Activated CD8-positive, alpha-beta T cell treated with anti-CD3 and anti-CD28 coated beads for 36 hours (primary cell): ENCODE measurements at regions of chr10 and their contacts with region 1.

Region 1: GRCh38 chr10:74081192-74081803 is 69.3 kb downstream of the AP3M1 start:
- DNase-seq: peak; percentile 56
- ATAC-seq: peak; percentile 37
- H3K4me3 Mint-ChIP-seq: no peak overlapping the region
- H3K27ac Mint-ChIP-seq: no peak overlapping the region
- H3K4me1 Mint-ChIP-seq: peaks cover 40% of the 10 kb centered on the region
- H3K27me3 Mint-ChIP-seq: no peaks in the 10 kb centered on the region
- CTCF ChIP-seq: peak; percentile 71

Region 2: GRCh38 chr10:73956476-73957359 is 124.6 kb before region 1 on chr10:
- CTCF ChIA-PET with region 1: interaction called, 30 read pairs
- POLR2A ChIA-PET with region 1: no interaction called
- intact Hi-C with region 1: loop called (anchors 5 kb)
- DNase-seq: peak; percentile 53
- ATAC-seq: peak; percentile 82
- H3K4me3 Mint-ChIP-seq: peak overlapping the region; percentile 38
- H3K27ac Mint-ChIP-seq: peak overlapping the region; percentile 84
- H3K4me1 Mint-ChIP-seq: peaks cover 40% of the 10 kb centered on the region
- H3K27me3 Mint-ChIP-seq: no peaks in the 10 kb centered on the region
- CTCF ChIP-seq: no peak

Region 3: GRCh38 chr10:73997787-73998622 is 83.3 kb before region 1 on chr10 and contains the start of gene VCL:
- CTCF ChIA-PET with region 1: interaction called, 14 read pairs
- POLR2A ChIA-PET with region 1: interaction called, 3 read pairs
- intact Hi-C with region 1: loop called (anchors 5 kb)
- DNase-seq: peak; percentile 97
- ATAC-seq: peak; percentile 98
- H3K4me3 Mint-ChIP-seq: peak within 1 kb of the TSS; percentile 92
- H3K27ac Mint-ChIP-seq: peak within 1 kb of the TSS; percentile 98
- H3K4me1 Mint-ChIP-seq: peaks cover 24% of the 10 kb centered on the region
- H3K27me3 Mint-ChIP-seq: no peaks in the 10 kb centered on the region
- CTCF ChIP-seq: no peak
- total RNA-seq, gene VCL: 16.9 to 17.7 TPM

Region 4: DNA sequence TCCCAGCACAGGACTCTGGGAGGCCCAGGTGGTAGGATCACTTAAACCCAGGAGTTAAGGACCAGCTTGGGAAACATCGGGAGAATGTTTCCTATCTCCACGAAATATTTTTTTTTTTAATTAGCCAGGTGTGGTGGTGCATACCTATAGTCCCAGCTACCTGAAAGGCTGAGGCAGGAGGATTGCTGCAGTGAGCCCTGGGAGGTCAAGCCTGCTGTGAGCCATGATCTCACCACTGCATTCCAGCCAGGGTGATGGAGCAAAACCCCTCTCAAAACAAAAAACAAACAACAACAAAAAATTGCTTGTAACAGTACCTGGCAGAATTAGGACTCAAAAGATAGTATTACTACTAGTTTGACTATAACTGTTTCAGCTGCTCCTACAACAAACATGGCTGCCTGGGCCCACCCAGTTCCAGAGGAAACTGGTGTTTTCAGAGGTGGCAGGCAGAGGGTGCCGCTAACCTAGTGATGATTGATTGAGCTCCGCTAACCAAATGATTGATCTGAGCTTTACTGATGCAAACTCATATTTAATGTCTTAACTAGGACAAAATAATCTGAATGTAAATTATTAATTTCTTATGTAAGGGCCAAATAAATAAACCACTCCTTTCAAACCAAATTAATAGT is 12.3 kb after region 1 on chr10:
- CTCF ChIA-PET with region 1: interaction called, 36 read pairs
- POLR2A ChIA-PET with region 1: no interaction called
- intact Hi-C with region 1: no loop called
- DNase-seq: no peak
- ATAC-seq: no peak
- H3K4me3 Mint-ChIP-seq: no peak overlapping the region
- H3K27ac Mint-ChIP-seq: no peak overlapping the region
- H3K4me1 Mint-ChIP-seq: no peaks in the 10 kb centered on the region
- H3K27me3 Mint-ChIP-seq: no peaks in the 10 kb centered on the region
- CTCF ChIP-seq: no peak

Region 5: GRCh38 chr10:74213571-74214162 is 132.4 kb after region 1 on chr10:
- CTCF ChIA-PET with region 1: no interaction called
- POLR2A ChIA-PET with region 1: no interaction called
- intact Hi-C with region 1: no loop called
- DNase-seq: peak; percentile 76
- ATAC-seq: peak; percentile 53
- H3K4me3 Mint-ChIP-seq: no peak overlapping the region
- H3K27ac Mint-ChIP-seq: no peak overlapping the region
- H3K4me1 Mint-ChIP-seq: peaks cover 12% of the 10 kb centered on the region
- H3K27me3 Mint-ChIP-seq: no peaks in the 10 kb centered on the region
- CTCF ChIP-seq: peak; percentile 68